ENCODE measurements at regions of chr3 and their contacts with region 1.

Region 1: DNA sequence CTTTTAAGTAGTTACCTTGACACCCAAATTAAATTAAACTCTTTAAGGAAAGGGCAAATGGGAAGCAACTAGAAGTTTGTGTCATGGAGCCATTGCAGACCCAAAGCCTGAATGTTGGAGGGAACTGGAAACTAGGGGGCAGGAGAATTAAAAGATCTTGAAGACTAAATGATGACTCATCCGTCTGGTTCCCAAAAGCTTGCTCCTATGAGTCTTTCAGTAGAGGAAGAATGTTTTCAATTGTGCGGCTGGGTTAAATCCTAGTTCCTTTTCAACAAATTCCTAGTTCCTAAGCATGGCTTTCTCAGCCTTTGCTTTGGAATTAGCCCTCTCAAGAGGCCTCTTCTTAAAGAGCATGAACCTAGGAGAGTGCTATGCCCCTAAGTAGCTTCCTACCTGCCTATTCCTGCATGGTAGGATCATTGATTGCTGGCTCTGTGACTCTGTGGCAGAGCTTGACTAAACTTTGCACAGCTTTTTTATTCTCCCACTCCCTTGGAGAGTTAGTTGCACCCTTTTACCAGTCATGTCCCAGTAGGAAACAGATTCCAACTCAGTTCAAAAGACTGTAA is 17.7 kb downstream of the CLEC3B start:
- DNase-seq: no peak
- ATAC-seq: no peak
- H3K4me3 ChIP-seq: no peak overlapping the region
- H3K27ac ChIP-seq: no peak overlapping the region
- H3K4me1 ChIP-seq: no peaks in the 10 kb centered on the region
- H3K27me3 ChIP-seq: peaks cover 0 to 9% of the 10 kb centered on the region in 2 experiments; a peak in 2 of 5 replicates
- CTCF ChIP-seq: no peak
- EP300 ChIP-seq: no peak
- POLR2A ChIP-seq: no peak
- RAD21 ChIP-seq: no peak

Region 2: GRCh38 chr3:45055411-45056143 is 11.8 kb after region 1 on chr3:
- CTCF ChIA-PET with region 1: no interaction called
- POLR2A ChIA-PET with region 1: no interaction called
- in situ Hi-C with region 1: no loop called
- intact Hi-C with region 1: loop called (anchors 2 kb)
- DNase-seq: peak; percentile 65
- ATAC-seq: peak; percentile 86
- H3K4me3 ChIP-seq: no peak overlapping the region
- H3K27ac ChIP-seq: no peak overlapping the region
- H3K4me1 ChIP-seq: peaks cover 9% of the 10 kb centered on the region; the same call in 1 of the 2 replicates
- H3K27me3 ChIP-seq: peaks cover 1 to 13% of the 10 kb centered on the region in 2 experiments; a peak in 2 of 5 replicates
- CTCF ChIP-seq: peak; percentile 59
- EP300 ChIP-seq: no peak
- POLR2A ChIP-seq: no peak
- RAD21 ChIP-seq: no peak

Region 3: DNA sequence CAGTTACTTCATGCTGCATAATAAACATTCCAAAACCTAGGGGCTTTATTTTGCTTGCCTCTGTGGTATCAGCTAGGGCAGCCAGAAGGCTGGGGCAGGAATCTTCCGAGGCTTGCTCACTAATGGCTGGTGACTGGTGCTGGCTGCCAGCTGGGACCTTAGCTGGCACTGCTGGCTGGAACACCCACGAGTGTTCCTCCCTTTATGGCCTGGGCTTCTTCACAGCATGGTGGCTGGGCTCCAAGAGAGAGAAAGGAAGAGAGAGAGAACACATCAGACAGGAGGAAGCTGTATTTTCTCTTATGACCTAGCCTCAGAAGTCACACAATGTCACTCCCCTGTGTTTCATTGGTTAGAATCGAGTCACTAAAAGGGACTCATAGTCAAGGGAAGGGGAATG is 126.3 kb after region 1 on chr3:
- CTCF ChIA-PET with region 1: interaction called, 3 read pairs
- POLR2A ChIA-PET with region 1: no interaction called
- in situ Hi-C with region 1: no loop called
- intact Hi-C with region 1: loop called (anchors 5 kb)
- DNase-seq: no peak
- ATAC-seq: no peak
- H3K4me3 ChIP-seq: no peak overlapping the region
- H3K27ac ChIP-seq: no peak overlapping the region
- H3K4me1 ChIP-seq: no peaks in the 10 kb centered on the region
- H3K27me3 ChIP-seq: peaks cover 0 to 5% of the 10 kb centered on the region in 2 experiments; a peak in 1 of 5 replicates
- CTCF ChIP-seq: no peak
- EP300 ChIP-seq: no peak
- POLR2A ChIP-seq: no peak
- RAD21 ChIP-seq: no peak

Region 4: GRCh38 chr3:45210308-45211041 is 166.7 kb after region 1 on chr3:
- CTCF ChIA-PET with region 1: interaction called, 42 read pairs
- POLR2A ChIA-PET with region 1: interaction called, 4 read pairs
- in situ Hi-C with region 1: loop called (anchors 5 kb)
- intact Hi-C with region 1: no loop called
- DNase-seq: peak; percentile 41
- ATAC-seq: peak; percentile 99
- H3K4me3 ChIP-seq: peak overlapping the region in 1 of 3 experiments; percentile 26; a peak in 1 of 6 replicates
- H3K27ac ChIP-seq: no peak overlapping the region
- H3K4me1 ChIP-seq: no peaks in the 10 kb centered on the region
- H3K27me3 ChIP-seq: peaks cover 0 to 11% of the 10 kb centered on the region in 2 experiments; a peak in 2 of 5 replicates
- CTCF ChIP-seq: peak; percentile 96
- EP300 ChIP-seq: no peak
- POLR2A ChIP-seq: no peak
- RAD21 ChIP-seq: peak; percentile 94

Measured in HepG2 (cell line).